Naive thymus-derived CD8-positive, alpha-beta T cell (primary cell): ENCODE measurements at regions of chr2 and their contacts with region 1.

Region 1: DNA sequence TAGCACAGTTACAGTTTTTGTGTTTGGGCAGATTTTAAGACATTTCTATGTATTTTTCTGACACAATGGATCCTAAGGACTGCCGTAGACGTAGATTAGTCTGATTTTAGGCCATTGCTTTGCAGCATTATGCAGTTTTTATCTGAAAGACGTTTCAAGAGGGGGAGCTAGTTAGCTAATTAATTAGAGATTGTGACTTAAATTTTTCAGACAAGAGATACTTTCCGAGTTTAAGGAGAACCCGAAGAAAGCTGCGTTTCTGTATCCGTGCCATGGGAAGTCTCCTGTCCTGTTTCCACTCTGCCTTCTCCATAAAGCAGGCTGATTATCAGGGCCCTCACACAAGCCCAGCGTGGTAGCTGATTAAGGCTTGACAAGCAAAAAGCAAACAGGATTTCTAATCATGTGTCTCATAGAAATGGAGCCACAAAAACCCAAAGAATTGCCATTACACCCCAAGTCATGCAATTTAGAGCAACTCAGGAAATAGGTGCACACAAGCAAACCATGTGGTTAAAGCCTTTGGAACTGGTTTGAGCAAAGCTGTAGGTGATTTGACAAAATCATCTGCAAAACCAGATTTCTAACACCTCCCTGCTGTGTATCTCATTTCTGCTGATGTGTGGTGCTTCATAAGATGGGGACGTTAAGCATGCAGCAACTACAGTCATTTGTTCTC is 808.1 kb downstream of the RNF144A start:
- DNase-seq: peak in 6 of 10 donors; percentile 12 to 74 (median 66)
- ATAC-seq: peak; percentile 79 to 86
- H3K4me3 Mint-ChIP-seq: peak overlapping the region; percentile 55 to 92 (median 82)
- H3K27ac Mint-ChIP-seq: peak overlapping the region; percentile 52 to 99 (median 88)
- H3K4me1 Mint-ChIP-seq: peaks cover 19 to 53% (median 46%) of the 10 kb centered on the region in 4 donors
- H3K27me3 Mint-ChIP-seq: no peaks in the 10 kb centered on the region

Region 2: GRCh38 chr2:7427293-7428060 is 297.8 kb before region 1 on chr2:
- POLR2A ChIA-PET with region 1: interaction called, 18 read pairs
- DNase-seq: peak in 6 of 10 donors; percentile 19 to 77 (median 62)
- ATAC-seq: peak; percentile 10 to 35
- H3K4me3 Mint-ChIP-seq: peak overlapping the region in 7 of 10 donors; percentile 2 to 48 (median 26)
- H3K27ac Mint-ChIP-seq: peak overlapping the region; percentile 47 to 99 (median 80)
- H3K4me1 Mint-ChIP-seq: peaks cover 34 to 46% (median 46%) of the 10 kb centered on the region in 4 donors
- H3K27me3 Mint-ChIP-seq: peaks cover 0 to 3% (median 0%) of the 10 kb centered on the region in 5 donors

Region 3: GRCh38 chr2:7748717-7749415 is 23.6 kb after region 1 on chr2:
- POLR2A ChIA-PET with region 1: no interaction called
- DNase-seq: no peak
- ATAC-seq: peak; percentile 58 to 68
- H3K4me3 Mint-ChIP-seq: peak overlapping the region in 3 of 10 donors; percentile 3 to 78 (median 31)
- H3K27ac Mint-ChIP-seq: peak overlapping the region in 7 of 10 donors; percentile 16 to 94 (median 43)
- H3K4me1 Mint-ChIP-seq: peaks cover 5 to 36% (median 19%) of the 10 kb centered on the region in 4 donors
- H3K27me3 Mint-ChIP-seq: no peaks in the 10 kb centered on the region